KBM-7 (cell line): ENCODE measurements at regions of chr5 and their contacts with region 1.

Region 1: DNA sequence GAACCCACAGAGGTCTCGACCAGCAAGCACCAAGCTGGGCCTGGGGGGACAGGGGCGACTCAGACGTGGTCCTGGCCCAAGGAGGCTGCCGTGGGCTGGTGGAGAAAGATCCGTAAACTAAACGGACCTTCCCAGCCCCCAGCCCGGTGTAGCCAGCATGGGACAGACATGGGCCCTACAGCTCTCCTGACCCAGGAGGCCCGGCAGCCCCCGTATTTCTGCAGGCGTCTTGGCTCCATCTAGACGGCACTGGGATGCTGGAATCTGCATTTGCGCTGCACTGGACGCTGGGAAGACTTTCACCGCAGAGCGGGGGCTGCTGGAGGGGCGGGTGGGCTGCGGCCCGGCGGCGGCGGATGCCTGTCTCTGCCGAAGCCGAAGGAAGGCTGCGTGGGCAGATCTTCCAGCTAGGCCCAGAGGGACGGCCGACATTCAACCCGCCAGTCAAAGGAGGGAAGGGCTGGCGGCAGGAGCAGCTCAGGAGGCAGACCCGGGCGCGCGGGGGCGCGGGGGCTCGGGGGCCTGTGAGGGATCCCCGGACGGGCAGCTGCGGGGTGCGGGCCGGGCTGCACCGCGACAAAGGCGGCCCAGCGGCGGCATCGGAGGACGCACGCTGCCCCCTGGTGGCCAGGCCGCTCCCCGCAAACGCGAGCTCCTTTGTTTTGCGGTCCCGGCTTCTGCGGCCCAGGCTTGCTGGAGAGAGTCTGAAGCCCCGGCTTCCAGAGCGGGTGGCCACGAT is 266.2 kb downstream of the NSG2 start:
- DNase-seq: peak; percentile 58

Region 2: GRCh38 chr5:173615884-173616576 is 695.7 kb before region 1 on chr5:
- in situ Hi-C with region 1: loop called (anchors 25 kb)
- DNase-seq: peak; percentile 72

Region 3: GRCh38 chr5:175045820-175046219 is 734.1 kb after region 1 on chr5:
- in situ Hi-C with region 1: no loop called
- DNase-seq: no peak